PC-9 (cell line): ENCODE measurements at regions of chr7 and their contacts with region 1.

Region 1: DNA sequence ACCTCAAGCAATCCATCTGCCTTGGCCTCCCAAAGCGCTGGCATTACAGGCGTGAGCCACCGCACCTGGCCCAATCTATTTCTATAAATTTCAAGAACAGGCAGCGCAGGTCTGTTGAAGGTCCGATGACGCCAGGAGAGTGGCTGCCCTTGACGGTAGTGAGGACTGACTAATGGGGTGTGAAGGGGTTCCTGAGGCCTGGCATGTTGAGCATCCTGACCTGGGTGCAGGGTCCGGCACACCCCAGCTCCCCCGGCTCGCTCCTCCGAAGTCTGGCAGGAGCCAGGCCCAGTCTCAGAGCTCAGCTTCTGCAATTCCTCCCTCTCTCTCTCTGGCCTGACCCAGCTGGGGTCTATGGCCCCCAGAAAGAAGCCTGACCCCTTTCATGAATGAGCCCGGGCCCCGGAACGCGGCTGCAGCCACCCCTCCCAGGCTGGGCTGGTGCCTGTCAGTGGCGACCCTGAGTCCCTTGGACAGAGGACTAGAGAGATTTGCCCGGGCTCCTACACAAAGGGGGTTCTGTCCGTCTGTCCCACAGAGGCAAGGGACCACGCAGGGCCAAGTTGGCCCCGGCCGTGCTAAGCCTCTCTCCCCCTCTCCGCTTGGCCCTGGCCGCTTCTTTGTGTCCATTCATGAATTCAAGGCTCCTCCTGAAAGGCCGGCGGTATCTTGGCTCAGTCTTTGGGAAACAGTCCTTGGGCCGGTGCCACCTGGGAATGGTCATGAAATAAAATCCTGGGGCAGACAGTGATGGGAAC is 18.8 kb downstream of the MMD2 start:
- DNase-seq: no peak
- H3K4me3 ChIP-seq: no peak overlapping the region
- H3K27ac ChIP-seq: no peak overlapping the region
- H3K4me1 ChIP-seq: no peaks in the 10 kb centered on the region
- H3K27me3 ChIP-seq: peaks cover 67% of the 10 kb centered on the region
- CTCF ChIP-seq: no peak

Region 2: GRCh38 chr7:4282434-4283223 is 657.5 kb before region 1 on chr7:
- CTCF ChIA-PET with region 1: no interaction called
- POLR2A ChIA-PET with region 1: no interaction called
- intact Hi-C with region 1: no loop called
- DNase-seq: peak in 1 of 2 experiments; percentile 64
- H3K4me3 ChIP-seq: no peak overlapping the region
- H3K27ac ChIP-seq: no peak overlapping the region
- H3K4me1 ChIP-seq: no peaks in the 10 kb centered on the region
- H3K27me3 ChIP-seq: peaks cover 75% of the 10 kb centered on the region
- CTCF ChIP-seq: no peak

Region 3: GRCh38 chr7:4809091-4809591 is 131.0 kb before region 1 on chr7:
- CTCF ChIA-PET with region 1: no interaction called
- POLR2A ChIA-PET with region 1: interaction called, 14 read pairs
- intact Hi-C with region 1: no loop called
- DNase-seq: no peak
- H3K4me3 ChIP-seq: no peak overlapping the region
- H3K27ac ChIP-seq: no peak overlapping the region
- H3K4me1 ChIP-seq: peaks cover 7% of the 10 kb centered on the region
- H3K27me3 ChIP-seq: peaks cover 72% of the 10 kb centered on the region
- CTCF ChIP-seq: no peak